BJ (cell line): ENCODE measurements at regions of chr6 and their contacts with region 1.

Region 1: DNA sequence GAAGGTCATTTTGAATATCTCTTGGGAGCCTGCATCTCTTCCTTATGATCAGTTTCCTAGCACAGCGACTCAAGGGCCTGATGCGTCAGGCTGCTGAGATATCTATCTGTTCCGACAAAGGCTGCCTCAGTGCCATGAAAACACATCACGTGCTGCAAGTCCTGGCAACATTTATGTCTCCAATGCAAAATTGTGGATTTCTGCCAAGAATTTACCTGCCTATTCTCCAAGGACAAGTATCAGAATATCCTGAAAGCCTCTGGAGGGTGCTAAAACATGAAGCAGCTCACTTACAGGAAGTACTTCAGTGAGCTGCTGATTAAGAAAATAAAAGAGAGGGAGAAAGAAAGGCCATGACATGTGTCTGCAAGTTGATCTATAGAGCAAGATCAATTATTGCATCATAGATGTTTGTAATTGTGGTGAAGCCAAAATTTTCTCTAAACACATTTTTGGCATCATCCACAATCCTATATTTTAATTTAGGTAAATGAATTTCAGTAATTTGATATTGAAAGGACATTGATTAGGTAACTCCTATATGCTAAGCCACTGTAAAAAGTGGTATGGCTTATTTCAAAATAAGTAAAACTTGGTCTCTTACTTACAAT is 25.9 kb upstream of the TPBG start:
- DNase-seq: no peak
- H3K4me3 ChIP-seq: no peak overlapping the region
- H3K27me3 ChIP-seq: no peaks in the 10 kb centered on the region
- CTCF ChIP-seq: no peak

Region 2: GRCh38 chr6:82322386-82322785 is 15.4 kb before region 1 on chr6:
- CTCF ChIA-PET with region 1: no interaction called
- POLR2A ChIA-PET with region 1: no interaction called
- DNase-seq: no peak
- H3K4me3 ChIP-seq: no peak overlapping the region
- H3K27me3 ChIP-seq: no peaks in the 10 kb centered on the region
- CTCF ChIP-seq: no peak

Region 3: GRCh38 chr6:82363351-82364086 is 25.8 kb after region 1 on chr6 and contains the start of gene TPBG:
- CTCF ChIA-PET with region 1: interaction called, 6 read pairs
- POLR2A ChIA-PET with region 1: interaction called, 11 read pairs
- DNase-seq: no peak
- H3K4me3 ChIP-seq: peak within 1 kb of the TSS; percentile 96
- H3K27me3 ChIP-seq: no peaks in the 10 kb centered on the region
- CTCF ChIP-seq: peak; percentile 39
- polyA plus RNA-seq, gene TPBG: 101 and 104 TPM in 2 replicates